Activated naive CD4-positive, alpha-beta T cell treated with anti-CD3 and anti-CD28 coated beads for 36 hours (primary cell): ENCODE measurements at regions of chr19 and their contacts with region 1.

Region 1: GRCh38 chr19:7366701-7367420 is 18.1 kb downstream of the ARHGEF18 start:
- DNase-seq: peak; percentile 50
- H3K4me3 Mint-ChIP-seq: no peak overlapping the region
- H3K27ac Mint-ChIP-seq: no peak overlapping the region
- H3K4me1 Mint-ChIP-seq: peaks cover 6% of the 10 kb centered on the region
- H3K27me3 Mint-ChIP-seq: no peaks in the 10 kb centered on the region

Region 2: GRCh38 chr19:7382694-7383093 is 15.8 kb after region 1 on chr19:
- CTCF ChIA-PET with region 1: interaction called, 22 read pairs
- intact Hi-C with region 1: loop called (anchors 1 kb)
- DNase-seq: no peak
- H3K4me3 Mint-ChIP-seq: no peak overlapping the region
- H3K27ac Mint-ChIP-seq: no peak overlapping the region
- H3K4me1 Mint-ChIP-seq: peaks cover 9% of the 10 kb centered on the region
- H3K27me3 Mint-ChIP-seq: no peaks in the 10 kb centered on the region

Region 3: DNA sequence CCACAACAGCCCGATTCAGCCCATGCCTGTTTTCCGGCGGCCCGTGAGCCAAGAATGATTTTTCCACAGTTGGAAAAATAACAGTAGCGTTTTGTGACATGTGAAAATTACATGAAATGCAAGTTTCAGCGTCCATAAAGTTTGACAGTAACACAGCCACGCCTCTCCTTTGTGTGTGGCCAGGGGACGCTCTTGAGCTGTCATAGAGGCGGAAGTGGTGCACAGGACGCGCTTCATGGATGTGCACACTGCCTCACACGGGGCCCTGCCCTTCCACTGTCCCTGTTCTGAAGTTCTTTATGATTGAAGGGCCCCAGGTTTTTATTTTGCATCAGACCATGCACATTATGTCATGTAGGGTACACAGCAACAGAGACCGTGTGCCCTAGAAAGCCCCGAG is 650.9 kb after region 1 on chr19:
- CTCF ChIA-PET with region 1: no interaction called
- intact Hi-C with region 1: no loop called
- DNase-seq: peak; percentile 49
- H3K4me3 Mint-ChIP-seq: no peak overlapping the region
- H3K27ac Mint-ChIP-seq: no peak overlapping the region
- H3K4me1 Mint-ChIP-seq: peaks cover 2% of the 10 kb centered on the region
- H3K27me3 Mint-ChIP-seq: no peaks in the 10 kb centered on the region